ENCODE measurements at regions of chr3 and their contacts with region 1.

Region 1: GRCh38 chr3:15815696-15816095 is 17.9 kb upstream of the ANKRD28 start:
- DNase-seq: no peak
- ATAC-seq: peak; percentile 68

Region 2: GRCh38 chr3:15629860-15630597 is 185.7 kb before region 1 on chr3:
- intact Hi-C with region 1: loop called (anchors 5 kb)
- DNase-seq: no peak
- ATAC-seq: peak; percentile 95

Region 3: GRCh38 chr3:15889936-15890335 is 74.2 kb after region 1 on chr3:
- intact Hi-C with region 1: no loop called
- DNase-seq: no peak
- ATAC-seq: no peak

Region 4: GRCh38 chr3:16048435-16049318 is 233.0 kb after region 1 on chr3:
- intact Hi-C with region 1: loop called (anchors 5 kb)
- DNase-seq: no peak
- ATAC-seq: peak; percentile 92

Region 5: DNA sequence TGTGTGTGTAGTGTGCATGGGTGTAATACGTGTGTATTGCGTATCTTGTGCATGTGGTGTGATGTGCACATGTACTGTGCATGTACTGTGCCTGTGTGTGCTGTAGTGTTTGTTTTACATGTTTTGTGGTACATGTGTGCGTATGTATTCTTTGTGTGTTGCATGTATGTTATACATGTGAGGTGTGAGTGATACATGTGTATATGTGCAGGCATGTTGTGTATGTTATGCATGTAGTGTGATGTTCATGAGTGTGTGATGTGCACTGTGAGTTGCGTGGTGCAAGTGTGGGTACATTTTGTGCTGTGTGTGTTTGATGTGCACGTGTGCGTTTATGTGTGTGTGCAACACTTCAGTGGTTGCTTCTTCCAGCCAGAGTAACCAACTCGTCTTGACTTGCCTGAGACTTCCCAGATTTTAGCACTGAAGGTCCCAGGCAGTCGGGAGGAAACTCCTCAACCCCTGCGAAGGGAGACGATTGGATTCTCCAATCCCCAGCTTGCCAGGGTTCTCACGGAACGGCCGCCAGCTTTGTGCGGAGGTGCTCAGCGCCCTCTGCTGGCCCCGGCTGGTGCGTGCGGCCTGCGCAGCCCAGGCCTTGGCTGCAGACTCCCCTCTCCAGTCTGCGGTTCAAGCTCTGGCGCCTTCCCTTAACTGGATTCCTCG is 362.4 kb after region 1 on chr3:
- intact Hi-C with region 1: loop called (anchors 5 kb)
- DNase-seq: peak; percentile 91
- ATAC-seq: peak; percentile 79

Region 6: DNA sequence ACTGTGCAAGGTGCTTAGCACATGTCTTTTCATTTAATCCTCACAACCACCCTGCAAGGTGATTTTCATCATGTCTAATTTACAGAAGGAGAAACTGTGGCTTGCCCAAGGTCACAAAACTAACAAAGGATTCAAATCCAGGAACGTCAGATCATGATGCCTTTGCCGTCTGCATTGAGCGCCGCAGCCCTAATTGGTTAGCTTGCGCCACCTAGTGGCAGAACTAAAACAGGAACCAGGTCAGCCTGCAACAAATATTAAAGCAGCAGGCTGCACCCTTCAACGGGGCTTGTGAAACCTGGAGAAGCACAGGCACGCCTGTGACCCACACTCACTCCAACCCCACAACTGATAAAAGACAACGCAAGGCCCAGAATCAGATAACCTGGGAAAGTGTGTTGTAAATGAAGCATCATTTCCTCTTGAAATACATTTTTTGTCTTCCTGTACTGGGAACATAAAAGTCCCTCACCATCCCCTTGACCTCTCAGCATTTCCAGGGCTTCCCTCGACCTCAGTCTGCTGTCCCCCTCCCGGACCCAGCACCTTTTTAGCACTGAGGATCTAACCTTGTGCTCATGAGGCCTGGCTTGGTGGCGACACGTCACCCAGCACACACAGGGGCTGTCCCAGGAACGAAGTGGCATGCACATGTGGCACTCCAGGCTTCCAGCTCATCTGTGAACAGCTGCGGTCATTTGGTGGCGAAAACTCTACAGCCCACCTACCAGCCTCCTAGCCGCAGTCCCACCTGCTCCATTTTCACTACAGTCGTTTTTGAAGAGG is 431.8 kb after region 1 on chr3:
- intact Hi-C with region 1: loop called (anchors 5 kb)
- DNase-seq: peak; percentile 78
- ATAC-seq: peak; percentile 69

Measured in Right ventricle myocardium superior (tissue), 1 donor.